Caco-2 (cell line): ENCODE measurements at regions of chr10 and their contacts with region 1.

Region 1: GRCh38 chr10:65301181-65301580 is 1624.7 kb upstream of the LRRTM3 start:
- DNase-seq: peak in 1 of 2 experiments; percentile 56
- H3K4me3 ChIP-seq: no peak overlapping the region
- H3K4me3 Mint-ChIP-seq: no peak overlapping the region
- H3K27ac Mint-ChIP-seq: peak overlapping the region; percentile 55
- H3K4me1 ChIP-seq: peaks cover 15% of the 10 kb centered on the region
- H3K4me1 Mint-ChIP-seq: peaks cover 18% of the 10 kb centered on the region
- H3K27me3 ChIP-seq: no peaks in the 10 kb centered on the region
- H3K27me3 Mint-ChIP-seq: no peaks in the 10 kb centered on the region
- CTCF ChIP-seq: no peak

Region 2: GRCh38 chr10:65320236-65321026 is 19.2 kb after region 1 on chr10:
- CTCF ChIA-PET with region 1: no interaction called
- POLR2A ChIA-PET with region 1: no interaction called
- intact Hi-C with region 1: loop called (anchors 1 kb)
- DNase-seq: no peak
- H3K4me3 ChIP-seq: no peak overlapping the region
- H3K4me3 Mint-ChIP-seq: no peak overlapping the region
- H3K27ac Mint-ChIP-seq: peak overlapping the region; percentile 63
- H3K4me1 ChIP-seq: peaks cover 37% of the 10 kb centered on the region
- H3K4me1 Mint-ChIP-seq: peaks cover 26% of the 10 kb centered on the region
- H3K27me3 ChIP-seq: no peaks in the 10 kb centered on the region
- H3K27me3 Mint-ChIP-seq: no peaks in the 10 kb centered on the region
- CTCF ChIP-seq: no peak

Region 3: DNA sequence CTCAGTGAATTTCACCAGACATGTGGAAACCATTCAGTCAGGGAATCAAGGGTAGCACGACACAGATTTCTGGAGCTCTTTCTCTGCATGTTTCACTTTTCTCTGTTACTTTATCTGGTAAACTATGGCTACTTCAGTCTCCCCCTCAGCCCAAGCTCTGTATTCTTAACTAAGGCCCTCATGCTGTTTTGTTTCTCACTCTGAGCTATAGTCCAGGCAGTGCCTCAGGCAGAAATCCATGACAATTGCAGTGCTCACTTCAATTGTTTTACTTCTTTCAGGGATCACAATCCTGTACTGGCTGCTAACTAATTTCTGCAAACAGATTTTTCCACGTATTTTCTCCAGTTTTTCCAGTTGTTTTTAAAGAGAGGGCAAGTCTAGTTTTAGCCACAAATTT is 24.7 kb after region 1 on chr10:
- CTCF ChIA-PET with region 1: no interaction called
- POLR2A ChIA-PET with region 1: no interaction called
- intact Hi-C with region 1: loop called (anchors 1 kb)
- DNase-seq: no peak
- H3K4me3 ChIP-seq: no peak overlapping the region
- H3K4me3 Mint-ChIP-seq: no peak overlapping the region
- H3K27ac Mint-ChIP-seq: peak overlapping the region; percentile 88
- H3K4me1 ChIP-seq: peaks cover 30% of the 10 kb centered on the region
- H3K4me1 Mint-ChIP-seq: peaks cover 24% of the 10 kb centered on the region
- H3K27me3 ChIP-seq: no peaks in the 10 kb centered on the region
- H3K27me3 Mint-ChIP-seq: no peaks in the 10 kb centered on the region
- CTCF ChIP-seq: no peak

Region 4: GRCh38 chr10:65394902-65395301 is 93.7 kb after region 1 on chr10:
- CTCF ChIA-PET with region 1: no interaction called
- POLR2A ChIA-PET with region 1: no interaction called
- intact Hi-C with region 1: no loop called
- DNase-seq: no peak
- H3K4me3 ChIP-seq: no peak overlapping the region
- H3K4me3 Mint-ChIP-seq: no peak overlapping the region
- H3K27ac Mint-ChIP-seq: no peak overlapping the region
- H3K4me1 ChIP-seq: no peaks in the 10 kb centered on the region
- H3K4me1 Mint-ChIP-seq: no peaks in the 10 kb centered on the region
- H3K27me3 ChIP-seq: no peaks in the 10 kb centered on the region
- H3K27me3 Mint-ChIP-seq: no peaks in the 10 kb centered on the region
- CTCF ChIP-seq: no peak